ENCODE measurements at regions of chr19 and their contacts with region 1.

Region 1: DNA sequence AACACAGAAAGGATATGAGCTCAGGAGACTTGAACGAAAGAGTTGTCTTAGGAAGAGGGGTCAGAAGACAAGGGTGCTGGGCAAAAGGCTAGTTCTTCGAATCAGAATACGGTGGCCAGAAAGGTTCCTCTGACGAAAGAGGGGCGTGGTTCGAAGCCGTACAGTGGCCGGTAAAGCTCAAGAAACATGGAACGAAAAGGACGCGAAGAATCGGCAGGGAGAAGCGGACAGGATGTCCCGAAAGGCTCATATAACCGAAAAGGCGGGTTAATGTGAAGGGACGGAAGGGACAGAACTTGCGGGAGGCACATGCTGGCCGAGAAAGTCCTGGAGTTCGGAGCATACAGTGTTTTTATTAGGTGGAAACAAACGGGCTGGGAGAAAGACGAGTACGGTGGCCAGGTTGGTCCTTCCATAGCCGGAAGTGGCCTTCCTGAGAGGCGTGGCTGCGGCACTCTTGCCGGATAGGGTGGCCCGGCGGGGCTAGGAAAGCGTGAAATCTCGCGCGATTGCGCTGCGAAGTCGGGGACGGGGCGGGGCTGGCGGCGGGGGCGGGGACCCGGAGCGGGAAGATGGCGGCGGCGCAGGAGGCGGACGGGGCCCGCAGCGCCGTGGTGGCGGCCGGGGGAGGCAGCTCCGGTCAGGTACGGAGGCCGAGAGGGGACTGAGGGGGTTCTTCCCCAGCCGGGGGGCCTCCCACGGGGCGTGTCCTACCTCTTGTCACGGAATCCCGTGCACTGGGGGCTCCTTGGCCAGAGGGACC is at the start of gene CLPTM1:
- DNase-seq: peak; percentile 96
- H3K4me3 ChIP-seq: peak within 1 kb of the TSS; percentile 90 to 98 (median 93)
- H3K27ac ChIP-seq: peak within 1 kb of the TSS; percentile 94
- H3K4me1 ChIP-seq: peaks cover 16% of the 10 kb centered on the region
- H3K27me3 ChIP-seq: no peaks in the 10 kb centered on the region
- CTCF ChIP-seq: no peak
- total RNA-seq, gene CLPTM1: 36.5 to 89.7 TPM

Region 2: GRCh38 chr19:44587963-44588770 is 366.8 kb before region 1 on chr19:
- CTCF ChIA-PET with region 1: no interaction called
- dilution Hi-C with region 1: no loop called
- in situ Hi-C with region 1: no loop called
- intact Hi-C with region 1: loop called (anchors 1 kb)
- DNase-seq: peak; percentile 74
- H3K4me3 ChIP-seq: no peak overlapping the region
- H3K27ac ChIP-seq: peak overlapping the region; percentile 76
- H3K4me1 ChIP-seq: peaks cover 20% of the 10 kb centered on the region
- H3K27me3 ChIP-seq: no peaks in the 10 kb centered on the region
- CTCF ChIP-seq: peak; percentile 13 to 52

Region 3: GRCh38 chr19:44607049-44607448 is 348.0 kb before region 1 on chr19:
- CTCF ChIA-PET with region 1: no interaction called
- dilution Hi-C with region 1: no loop called
- in situ Hi-C with region 1: no loop called
- intact Hi-C with region 1: no loop called
- DNase-seq: no peak
- H3K4me3 ChIP-seq: no peak overlapping the region
- H3K27ac ChIP-seq: no peak overlapping the region
- H3K4me1 ChIP-seq: no peaks in the 10 kb centered on the region
- H3K27me3 ChIP-seq: no peaks in the 10 kb centered on the region
- CTCF ChIP-seq: no peak

Region 4: GRCh38 chr19:44718441-44719261 is 236.4 kb before region 1 on chr19:
- CTCF ChIA-PET with region 1: interaction called, 3 read pairs
- dilution Hi-C with region 1: loop called (anchors 10 kb)
- in situ Hi-C with region 1: no loop called
- intact Hi-C with region 1: no loop called
- DNase-seq: no peak
- H3K4me3 ChIP-seq: no peak overlapping the region
- H3K27ac ChIP-seq: no peak overlapping the region
- H3K4me1 ChIP-seq: peaks cover 11% of the 10 kb centered on the region
- H3K27me3 ChIP-seq: no peaks in the 10 kb centered on the region
- CTCF ChIP-seq: no peak

Region 5: GRCh38 chr19:44770550-44771257 is 184.3 kb before region 1 on chr19:
- CTCF ChIA-PET with region 1: no interaction called
- dilution Hi-C with region 1: no loop called
- in situ Hi-C with region 1: no loop called
- intact Hi-C with region 1: loop called (anchors 10 kb)
- DNase-seq: peak; percentile 97
- H3K4me3 ChIP-seq: no peak overlapping the region
- H3K27ac ChIP-seq: peak overlapping the region; percentile 73
- H3K4me1 ChIP-seq: peaks cover 31% of the 10 kb centered on the region
- H3K27me3 ChIP-seq: no peaks in the 10 kb centered on the region
- CTCF ChIP-seq: peak; percentile 57 to 75

Region 6: DNA sequence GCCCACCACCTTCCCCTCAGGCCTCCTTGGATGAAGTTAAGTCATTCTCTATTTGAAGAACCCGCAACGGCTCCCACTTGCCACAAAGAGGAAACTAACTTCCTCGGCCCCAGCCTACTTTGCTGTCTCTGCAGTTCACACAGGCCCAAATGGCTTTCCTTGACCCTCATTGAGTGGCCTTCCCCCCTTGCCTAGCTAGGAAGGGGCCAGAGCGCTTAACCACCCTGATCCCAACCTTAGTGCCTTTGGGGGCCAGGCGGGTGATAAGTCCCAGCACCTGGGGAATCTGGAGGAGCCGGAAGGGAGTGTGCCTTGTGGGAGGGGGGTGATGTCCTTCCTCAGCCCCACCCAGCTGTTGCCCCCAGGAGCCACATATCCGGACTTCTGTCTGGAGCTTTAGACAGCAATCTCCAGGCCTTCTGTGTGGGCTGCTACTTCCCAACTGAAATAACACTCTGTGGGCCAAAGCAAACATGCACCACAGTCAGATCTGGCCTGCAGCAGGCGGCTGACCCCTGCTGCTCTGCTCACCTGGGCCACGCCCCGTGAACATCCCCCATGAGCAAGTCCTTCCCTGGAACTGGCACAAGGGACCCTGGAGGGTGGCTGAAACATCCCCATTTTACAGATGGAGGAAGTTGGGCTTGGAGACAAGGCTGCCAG is 98.5 kb before region 1 on chr19:
- CTCF ChIA-PET with region 1: no interaction called
- dilution Hi-C with region 1: loop called (anchors 5 kb)
- in situ Hi-C with region 1: no loop called
- intact Hi-C with region 1: no loop called
- DNase-seq: no peak
- H3K4me3 ChIP-seq: no peak overlapping the region
- H3K27ac ChIP-seq: no peak overlapping the region
- H3K4me1 ChIP-seq: no peaks in the 10 kb centered on the region
- H3K27me3 ChIP-seq: no peaks in the 10 kb centered on the region
- CTCF ChIP-seq: no peak

Region 7: DNA sequence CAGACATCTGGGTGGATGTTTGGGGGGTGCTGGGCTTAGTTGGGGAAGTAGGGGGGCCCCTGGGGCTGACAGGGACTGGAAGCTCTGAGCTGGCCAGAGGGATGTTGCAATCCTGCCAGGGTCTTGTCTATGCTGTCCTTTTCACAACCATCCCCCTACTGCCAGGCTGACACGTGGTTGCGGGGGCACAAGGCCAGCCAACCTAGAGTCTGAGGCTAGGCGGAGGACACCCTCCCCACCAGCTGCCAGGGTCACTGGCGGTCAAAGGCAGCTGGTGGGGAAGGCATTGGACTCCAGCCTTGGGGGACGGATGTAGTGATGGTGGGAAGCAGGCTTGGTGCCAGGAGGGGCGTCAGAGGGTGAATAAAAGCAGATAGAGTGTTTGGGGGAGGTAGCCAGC is 42.2 kb before region 1 on chr19:
- CTCF ChIA-PET with region 1: interaction called, 11 read pairs
- dilution Hi-C with region 1: loop called (anchors 5 kb)
- in situ Hi-C with region 1: loop called in 1 of 2 experiments (anchors 5 kb)
- intact Hi-C with region 1: no loop called
- DNase-seq: no peak
- H3K4me3 ChIP-seq: no peak overlapping the region
- H3K27ac ChIP-seq: no peak overlapping the region
- H3K4me1 ChIP-seq: peaks cover 10% of the 10 kb centered on the region
- H3K27me3 ChIP-seq: no peaks in the 10 kb centered on the region
- CTCF ChIP-seq: no peak

Region 8: GRCh38 chr19:45250832-45251451 is 295.9 kb after region 1 on chr19 and contains the start of gene MARK4:
- CTCF ChIA-PET with region 1: no interaction called
- dilution Hi-C with region 1: no loop called
- in situ Hi-C with region 1: no loop called
- intact Hi-C with region 1: no loop called
- DNase-seq: peak; percentile 61
- H3K4me3 ChIP-seq: peak within 1 kb of the TSS; percentile 64 to 83 (median 76)
- H3K27ac ChIP-seq: peak within 1 kb of the TSS; percentile 48
- H3K4me1 ChIP-seq: peaks cover 31% of the 10 kb centered on the region
- H3K27me3 ChIP-seq: no peaks in the 10 kb centered on the region
- CTCF ChIP-seq: no peak
- total RNA-seq, gene MARK4: 13.3 to 48.9 TPM